Ovary (tissue), 10 donors: ENCODE measurements at regions of chr3 and their contacts with region 1.

Region 1: DNA sequence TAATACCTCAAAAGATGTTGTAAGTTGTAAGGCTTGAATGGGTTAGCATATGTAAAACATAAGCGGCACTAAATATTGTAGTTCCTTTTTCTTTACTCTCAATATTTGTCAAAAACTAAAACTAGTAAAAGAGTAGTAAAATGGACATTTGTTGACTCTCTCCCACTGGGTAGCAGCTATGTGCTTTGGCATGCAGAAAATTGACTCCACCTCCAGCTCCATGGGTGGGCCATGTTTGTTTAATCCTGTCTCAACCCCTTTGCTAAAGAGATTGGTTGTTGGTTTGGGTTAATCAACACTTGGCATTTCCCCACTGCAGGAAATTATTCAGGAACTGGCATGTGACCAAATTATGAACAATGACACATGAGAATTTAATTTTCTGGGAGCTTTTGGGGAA is 114.8 kb downstream of the EOMES start:
- DNase-seq: no peak
- H3K4me3 ChIP-seq: no peak overlapping the region
- H3K27ac ChIP-seq: no peak overlapping the region
- H3K4me1 ChIP-seq: no peaks in the 10 kb centered on the region
- H3K27me3 ChIP-seq: no peaks in the 10 kb centered on the region
- CTCF ChIP-seq: no peak
- EP300 ChIP-seq: no peak
- POLR2A ChIP-seq: no peak

Region 2: DNA sequence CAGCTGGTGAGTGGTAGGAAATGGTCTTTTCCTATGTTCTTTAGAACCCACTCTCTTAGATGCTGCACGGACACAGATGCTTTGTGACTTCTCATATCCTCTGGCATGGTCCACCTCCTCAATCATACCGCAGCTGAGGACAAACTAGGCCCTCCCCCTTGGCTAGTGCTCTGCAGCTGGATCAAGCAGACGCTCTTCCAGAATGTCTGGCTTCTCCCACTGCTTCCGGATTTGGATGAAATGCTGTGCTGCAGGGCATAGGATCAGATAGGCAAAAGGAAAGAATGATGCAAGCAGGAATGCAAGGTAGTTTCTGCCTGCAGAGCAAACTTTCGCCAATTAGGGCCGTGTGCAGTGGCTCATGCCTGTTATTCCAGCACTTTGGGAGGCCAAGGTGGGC is 47.5 kb before region 1 on chr3:
- intact Hi-C with region 1: loop called in 1 of 4 experiments (anchors 5 kb)
- DNase-seq: peak in 1 of 5 donors; percentile 25
- H3K4me3 ChIP-seq: no peak overlapping the region
- H3K27ac ChIP-seq: no peak overlapping the region
- H3K4me1 ChIP-seq: no peaks in the 10 kb centered on the region
- H3K27me3 ChIP-seq: no peaks in the 10 kb centered on the region
- CTCF ChIP-seq: no peak
- EP300 ChIP-seq: no peak
- POLR2A ChIP-seq: no peak